RWPE1 (cell line): ENCODE measurements at regions of chr17 and their contacts with region 1.

Region 1: DNA sequence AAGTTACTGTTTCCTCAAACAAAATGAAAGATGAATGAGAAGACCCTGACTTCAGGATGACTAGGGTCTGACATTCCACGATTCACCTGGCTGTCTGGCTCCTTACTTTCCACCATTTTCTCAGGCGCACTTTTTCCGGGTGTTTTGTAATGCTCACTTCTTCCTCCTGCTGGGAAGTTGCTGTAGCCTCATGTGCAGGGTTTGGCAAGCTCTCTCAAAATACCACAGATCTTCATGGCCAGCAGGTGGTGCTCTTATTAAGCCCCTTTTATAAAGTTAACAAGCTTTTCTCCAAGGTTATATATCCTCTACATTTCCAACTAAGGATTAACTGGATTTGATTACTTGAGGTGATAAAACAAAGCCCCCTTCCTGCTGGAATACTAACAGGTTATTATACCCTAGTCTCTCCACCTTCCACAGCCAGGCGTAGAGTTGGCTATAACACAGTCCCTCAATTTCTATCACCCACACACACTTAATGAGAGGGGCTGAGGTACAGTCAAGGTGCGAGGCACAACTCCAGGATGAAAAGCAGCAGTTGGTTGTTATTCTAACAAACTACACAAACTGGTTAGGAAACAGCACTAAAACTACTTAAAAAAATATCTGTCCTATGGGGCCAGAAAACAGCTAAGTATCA is 45.4 kb downstream of the STH start:
- DNase-seq: peak; percentile 46
- H3K27ac ChIP-seq: no peak overlapping the region
- CTCF ChIP-seq: peak; percentile 84

Region 2: DNA sequence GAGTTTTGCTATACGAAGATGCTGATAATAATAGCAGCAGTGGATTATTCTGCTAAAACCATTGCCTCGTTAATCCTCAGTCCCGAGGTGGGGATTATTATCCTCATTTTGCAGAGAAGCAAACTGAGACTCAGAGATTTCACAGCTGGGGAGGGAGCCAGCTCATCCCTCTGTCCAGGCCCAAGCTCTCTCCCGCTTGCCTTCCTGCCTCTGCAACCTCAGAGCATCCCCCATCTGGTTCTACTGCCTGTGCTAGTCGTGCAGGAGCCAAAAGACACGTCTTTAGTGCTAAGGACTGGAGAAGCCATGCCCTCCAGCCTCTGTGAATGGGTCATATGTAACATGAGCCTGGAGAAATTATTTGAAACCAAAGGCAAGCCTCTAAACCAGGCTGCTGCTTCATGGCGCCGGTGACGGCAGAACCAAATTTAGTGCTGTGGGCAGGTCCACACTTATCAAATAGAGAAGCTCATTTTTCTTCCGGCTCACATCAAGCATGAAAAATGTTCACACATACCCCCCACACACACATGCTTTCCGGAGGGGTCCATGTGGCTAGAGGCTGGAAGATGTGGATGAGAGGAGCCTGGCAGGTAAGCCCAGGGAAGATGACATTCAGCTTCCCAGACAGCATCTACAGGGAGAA is 136.5 kb before region 1 on chr17:
- CTCF ChIA-PET with region 1: no interaction called
- POLR2A ChIA-PET with region 1: no interaction called
- DNase-seq: no peak
- H3K27ac ChIP-seq: no peak overlapping the region
- CTCF ChIP-seq: no peak

Region 3: DNA sequence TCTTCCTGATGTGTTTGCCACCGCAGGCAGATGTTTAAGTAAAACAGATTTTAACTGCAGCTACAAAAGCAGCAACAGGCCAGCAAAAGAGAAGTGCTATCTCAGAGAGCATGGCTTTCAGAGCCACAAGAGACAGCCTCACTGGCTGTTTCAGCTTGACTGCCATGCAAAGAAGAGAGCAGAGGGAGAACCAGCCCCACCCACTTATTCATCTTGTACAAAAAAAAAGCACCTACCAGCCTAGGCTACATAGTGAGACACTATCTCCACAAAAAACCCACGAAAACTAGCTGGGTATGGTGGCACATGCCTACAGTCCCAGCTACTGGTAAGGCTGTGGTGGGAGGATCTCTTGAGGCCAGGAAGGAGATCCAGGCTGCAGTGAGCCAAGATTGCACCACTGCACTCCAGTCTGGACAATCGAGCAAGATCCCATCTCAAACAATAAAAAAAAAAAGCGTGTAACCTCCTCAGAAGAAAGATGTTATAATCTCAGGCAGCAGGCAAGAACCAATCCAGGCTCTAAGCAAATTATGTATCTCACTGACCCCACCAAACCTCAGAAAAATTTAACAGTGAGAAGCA is 15.3 kb before region 1 on chr17:
- CTCF ChIA-PET with region 1: interaction called, 11 read pairs
- POLR2A ChIA-PET with region 1: no interaction called
- DNase-seq: no peak
- H3K27ac ChIP-seq: no peak overlapping the region
- CTCF ChIP-seq: no peak

Region 4: DNA sequence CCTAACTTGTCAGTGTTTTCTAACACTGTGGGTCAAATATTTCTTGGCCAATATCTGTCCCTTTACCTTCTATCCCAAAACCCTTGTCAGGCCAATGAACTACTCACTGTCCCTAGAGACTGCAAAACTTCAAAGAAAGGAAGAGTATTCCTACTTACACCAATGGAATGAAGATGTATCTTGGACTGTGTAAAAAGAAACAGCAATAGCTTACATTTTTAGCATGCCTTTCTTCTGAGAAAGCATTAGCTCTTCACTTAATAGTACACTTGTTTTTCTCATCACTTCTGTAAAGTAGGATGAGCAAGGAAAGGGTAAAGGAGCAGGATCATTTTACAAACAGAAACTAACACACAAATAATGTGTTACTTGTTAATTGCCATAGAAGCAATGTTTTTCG is 28.6 kb after region 1 on chr17:
- CTCF ChIA-PET with region 1: interaction called, 10 read pairs
- POLR2A ChIA-PET with region 1: no interaction called
- DNase-seq: peak; percentile 16
- H3K27ac ChIP-seq: no peak overlapping the region
- CTCF ChIP-seq: no peak

Region 5: GRCh38 chr17:46167826-46168569 is 123.6 kb after region 1 on chr17:
- CTCF ChIA-PET with region 1: no interaction called
- POLR2A ChIA-PET with region 1: no interaction called
- DNase-seq: no peak
- H3K27ac ChIP-seq: no peak overlapping the region
- CTCF ChIP-seq: no peak